ENCODE measurements at regions of chr5 and their contacts with region 1.

Region 1: DNA sequence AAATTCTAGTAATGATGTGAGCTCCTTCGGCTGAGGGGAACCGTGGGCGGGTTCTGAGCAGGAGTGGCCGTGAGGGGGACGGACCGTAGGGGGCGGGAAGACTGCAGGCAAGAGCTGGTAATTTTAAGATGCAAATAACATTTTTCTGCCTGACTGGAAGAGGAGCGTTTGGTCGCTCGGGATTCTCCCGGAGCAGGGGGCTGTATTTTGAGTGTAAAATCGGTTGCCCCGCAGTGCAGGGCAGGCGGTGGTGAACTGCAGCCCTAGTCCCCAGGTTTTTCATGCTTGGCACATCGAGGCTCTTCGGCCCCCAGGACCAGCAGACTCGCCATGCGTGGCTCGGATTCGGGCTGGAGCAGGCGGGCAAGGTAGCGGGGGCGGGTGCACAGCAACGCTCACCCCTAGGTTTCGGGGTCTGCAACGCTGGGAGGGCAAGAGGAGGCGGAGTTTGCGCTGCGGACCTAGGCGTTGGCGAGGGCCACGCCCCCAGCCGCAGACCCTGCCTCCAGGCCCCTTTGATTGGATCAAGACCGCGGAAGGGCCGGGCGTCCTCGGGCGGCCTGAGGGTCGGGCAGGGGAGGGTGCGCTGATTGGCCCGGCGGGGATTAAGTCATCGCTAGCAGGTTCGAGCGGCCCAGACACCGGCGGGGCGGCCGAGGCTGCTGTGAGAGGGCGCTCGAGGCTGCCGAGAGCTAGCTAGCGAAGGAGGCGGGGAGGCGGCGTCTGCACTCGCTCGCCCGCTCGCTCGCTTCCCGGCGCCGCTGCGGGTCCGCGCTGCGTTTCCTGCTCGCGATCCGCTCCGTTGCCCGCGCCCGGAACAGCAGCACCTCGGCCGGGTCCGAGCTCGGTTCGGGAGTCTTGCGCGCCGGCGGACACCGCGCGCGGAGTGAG is at the start of gene ARHGAP26:
- DNase-seq: peak; percentile 70
- ATAC-seq: peak; percentile 99
- H3K4me3 ChIP-seq: peak within 1 kb of the TSS; percentile 85
- H3K27ac ChIP-seq: no peak within 1 kb of the TSS
- H3K4me1 ChIP-seq: peaks cover 5% of the 10 kb centered on the region; the same call in 1 of the 2 replicates
- H3K27me3 ChIP-seq: peaks cover 0 to 3% of the 10 kb centered on the region in 2 experiments; a peak in 3 of 4 replicates
- CTCF ChIP-seq: peak in 2 of 3 experiments; percentile 17 to 35; a peak in 2 of 6 replicates
- EP300 ChIP-seq: no peak
- POLR2A ChIP-seq: peak; percentile 91
- RAD21 ChIP-seq: no peak
- polyA plus RNA-seq, gene ARHGAP26: 9.4 to 9.8 TPM

Region 2: DNA sequence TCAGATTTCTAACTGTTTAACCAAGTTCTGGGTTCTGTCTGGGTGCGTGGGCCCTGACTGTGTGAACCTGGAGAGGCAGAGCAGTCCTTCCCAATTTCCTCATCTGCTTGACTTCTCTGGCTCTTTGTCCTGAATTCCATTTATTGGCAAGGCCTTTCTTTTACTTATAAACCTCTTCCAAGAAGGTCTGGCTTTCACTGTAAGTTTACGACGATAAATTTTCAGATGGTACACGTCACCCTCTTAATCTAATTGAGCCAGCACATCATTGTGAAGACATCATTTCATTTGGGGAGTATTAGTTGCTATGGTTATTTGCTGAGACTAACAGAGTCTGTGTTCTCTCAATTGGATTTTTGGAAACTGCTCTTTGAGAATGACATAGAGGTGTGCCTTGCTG is 92.6 kb after region 1 on chr5:
- CTCF ChIA-PET with region 1: interaction called, 9 read pairs
- POLR2A ChIA-PET with region 1: interaction called, 3 read pairs
- RAD21 ChIA-PET with region 1: interaction called, 9 read pairs
- SMC1A ChIA-PET with region 1: interaction called, 10 read pairs
- in situ Hi-C with region 1: no loop called
- intact Hi-C with region 1: loop called (anchors 2 kb)
- DNase-seq: no peak
- ATAC-seq: no peak
- H3K4me3 ChIP-seq: no peak overlapping the region
- H3K27ac ChIP-seq: no peak overlapping the region
- H3K4me1 ChIP-seq: no peaks in the 10 kb centered on the region
- H3K27me3 ChIP-seq: no peaks in the 10 kb centered on the region
- CTCF ChIP-seq: no peak
- EP300 ChIP-seq: no peak
- POLR2A ChIP-seq: no peak
- RAD21 ChIP-seq: no peak

Region 3: GRCh38 chr5:142906863-142907671 is 137.1 kb after region 1 on chr5:
- CTCF ChIA-PET with region 1: no interaction called
- POLR2A ChIA-PET with region 1: no interaction called
- RAD21 ChIA-PET with region 1: no interaction called
- SMC1A ChIA-PET with region 1: no interaction called
- in situ Hi-C with region 1: no loop called
- intact Hi-C with region 1: no loop called
- DNase-seq: no peak
- ATAC-seq: no peak
- H3K4me3 ChIP-seq: no peak overlapping the region
- H3K27ac ChIP-seq: no peak overlapping the region
- H3K4me1 ChIP-seq: no peaks in the 10 kb centered on the region
- H3K27me3 ChIP-seq: no peaks in the 10 kb centered on the region
- CTCF ChIP-seq: no peak
- EP300 ChIP-seq: no peak
- POLR2A ChIP-seq: no peak
- RAD21 ChIP-seq: no peak

Region 4: DNA sequence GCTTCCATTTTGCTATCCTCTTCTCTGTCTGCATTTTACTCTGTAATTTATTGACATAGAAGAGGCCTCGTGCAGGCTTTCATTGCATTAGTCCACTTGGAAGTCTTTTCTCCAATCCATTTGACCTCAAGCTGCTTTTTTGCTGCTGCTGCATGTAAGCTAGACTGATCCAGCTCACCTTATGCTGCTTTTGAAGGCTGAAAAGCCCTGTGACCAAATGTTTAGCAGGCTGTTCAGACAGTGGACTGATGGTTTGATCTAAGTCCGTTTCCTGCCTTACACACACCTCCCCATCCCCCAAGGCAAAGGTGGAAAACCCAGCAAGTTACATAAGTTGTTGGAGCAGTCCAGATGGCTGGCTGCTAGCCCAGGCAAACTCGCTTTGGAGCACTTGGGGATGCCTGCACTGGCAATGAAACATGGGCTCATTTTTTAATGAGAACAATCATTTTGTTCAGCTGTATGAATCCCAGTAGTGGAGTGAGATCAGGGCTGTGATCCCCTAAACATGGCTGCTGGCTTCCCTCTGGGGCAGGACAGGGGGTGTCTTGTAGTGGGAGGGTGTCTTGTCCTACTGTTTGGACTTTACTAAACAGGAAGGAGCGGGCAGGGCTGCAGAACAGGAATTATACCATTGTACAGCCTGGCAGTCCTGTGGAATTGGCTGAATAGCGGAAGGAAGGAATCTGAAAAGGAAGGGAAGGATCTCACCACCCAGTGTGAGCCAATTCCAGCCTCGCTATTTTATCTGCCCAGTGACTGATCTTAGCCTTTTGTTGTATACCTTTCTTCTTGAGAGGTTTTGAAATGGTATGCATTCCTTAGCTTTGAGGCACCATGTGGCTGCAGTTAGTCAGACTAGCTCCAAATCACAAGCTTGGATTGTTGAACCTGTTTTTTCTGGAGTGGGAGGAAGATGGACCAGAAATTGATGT is 212.2 kb after region 1 on chr5:
- CTCF ChIA-PET with region 1: no interaction called
- POLR2A ChIA-PET with region 1: no interaction called
- RAD21 ChIA-PET with region 1: no interaction called
- SMC1A ChIA-PET with region 1: no interaction called
- in situ Hi-C with region 1: no loop called
- intact Hi-C with region 1: no loop called
- DNase-seq: no peak
- ATAC-seq: no peak
- H3K4me3 ChIP-seq: no peak overlapping the region
- H3K27ac ChIP-seq: no peak overlapping the region
- H3K4me1 ChIP-seq: peaks cover 8% of the 10 kb centered on the region
- H3K27me3 ChIP-seq: no peaks in the 10 kb centered on the region
- CTCF ChIP-seq: no peak
- EP300 ChIP-seq: no peak
- POLR2A ChIP-seq: no peak
- RAD21 ChIP-seq: no peak

Measured in GM12878 (cell line).